Activated T-helper 2 cell treated with anti-CD3 and anti-CD28 coated beads, Interferon-gamma antibody, Interleukin-2, Interleukin-4, amounts not matched to agents 10 μg/mL and 5 μg/mL and 100 μg/mL, durations not matched to agents 14 hours and 24 hours and 36 hours (primary cell): ENCODE measurements at regions of chr1 and their contacts with region 1.

Region 1: DNA sequence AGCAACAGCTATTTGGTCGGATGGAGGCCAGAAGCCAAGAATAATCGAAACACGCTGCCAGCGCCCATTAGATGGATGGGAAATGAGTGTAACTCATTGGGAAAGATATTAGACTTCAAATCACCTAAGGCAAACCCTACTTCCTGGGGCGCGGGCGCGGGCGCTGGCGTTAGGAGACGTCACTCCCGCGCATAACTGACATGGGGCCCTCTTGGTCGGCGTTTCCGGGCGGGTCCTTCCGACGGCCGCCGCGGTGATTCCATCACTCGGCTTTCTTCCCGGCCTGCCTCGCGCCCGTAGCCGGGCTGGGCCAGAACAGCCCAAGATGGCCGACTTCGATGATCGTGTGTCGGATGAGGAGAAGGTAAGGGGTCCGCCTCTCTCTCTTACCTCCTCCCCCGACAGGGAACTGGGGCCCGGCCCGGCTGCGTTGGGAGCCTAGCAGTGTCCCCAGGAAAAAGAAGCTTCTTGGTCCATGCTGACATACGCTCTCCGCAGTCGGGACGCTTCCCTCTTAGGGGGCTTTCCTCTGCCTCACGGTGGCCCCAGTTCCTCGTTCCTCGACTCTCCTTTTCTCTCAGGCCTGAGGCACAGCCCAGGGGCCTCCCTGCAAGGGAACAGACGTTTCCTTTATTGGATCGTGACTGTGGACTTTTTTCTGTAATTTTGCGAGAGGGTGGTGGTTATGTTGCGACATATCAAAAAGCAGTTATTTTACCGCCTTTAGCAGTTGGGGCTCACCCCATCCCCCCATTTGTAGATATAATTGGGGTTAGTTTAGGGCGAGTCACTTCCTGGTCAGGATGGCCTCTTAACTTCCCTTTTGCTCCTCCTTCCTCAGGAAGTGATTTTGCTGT is at the start of gene CAPZA1:
- DNase-seq: peak; percentile 90
- H3K4me3 Mint-ChIP-seq: peak within 1 kb of the TSS; percentile 99
- H3K27ac Mint-ChIP-seq: peak within 1 kb of the TSS; percentile 99
- H3K4me1 Mint-ChIP-seq: peaks cover 25% of the 10 kb centered on the region
- H3K27me3 Mint-ChIP-seq: no peaks in the 10 kb centered on the region
- total RNA-seq, gene CAPZA1: 260 and 269 TPM in 2 replicates

Region 2: GRCh38 chr1:112466078-112466660 is 153.6 kb before region 1 on chr1:
- intact Hi-C with region 1: loop called (anchors 10 kb)
- DNase-seq: peak; percentile 79
- H3K4me3 Mint-ChIP-seq: peak overlapping the region; percentile 77
- H3K27ac Mint-ChIP-seq: no peak overlapping the region
- H3K4me1 Mint-ChIP-seq: peaks cover 13% of the 10 kb centered on the region
- H3K27me3 Mint-ChIP-seq: peaks cover 26% of the 10 kb centered on the region

Region 3: GRCh38 chr1:112508278-112509004 is 111.3 kb before region 1 on chr1 and contains the start of gene WNT2B:
- intact Hi-C with region 1: loop called (anchors 5 kb)
- DNase-seq: peak; percentile 33
- H3K4me3 Mint-ChIP-seq: peak within 1 kb of the TSS; percentile 69
- H3K27ac Mint-ChIP-seq: no peak within 1 kb of the TSS
- H3K4me1 Mint-ChIP-seq: peaks cover 2% of the 10 kb centered on the region
- H3K27me3 Mint-ChIP-seq: peaks cover 55% of the 10 kb centered on the region
- total RNA-seq, gene WNT2B: 0.16 TPM in 1 of 2 replicates, not detected in the other

Region 4: DNA sequence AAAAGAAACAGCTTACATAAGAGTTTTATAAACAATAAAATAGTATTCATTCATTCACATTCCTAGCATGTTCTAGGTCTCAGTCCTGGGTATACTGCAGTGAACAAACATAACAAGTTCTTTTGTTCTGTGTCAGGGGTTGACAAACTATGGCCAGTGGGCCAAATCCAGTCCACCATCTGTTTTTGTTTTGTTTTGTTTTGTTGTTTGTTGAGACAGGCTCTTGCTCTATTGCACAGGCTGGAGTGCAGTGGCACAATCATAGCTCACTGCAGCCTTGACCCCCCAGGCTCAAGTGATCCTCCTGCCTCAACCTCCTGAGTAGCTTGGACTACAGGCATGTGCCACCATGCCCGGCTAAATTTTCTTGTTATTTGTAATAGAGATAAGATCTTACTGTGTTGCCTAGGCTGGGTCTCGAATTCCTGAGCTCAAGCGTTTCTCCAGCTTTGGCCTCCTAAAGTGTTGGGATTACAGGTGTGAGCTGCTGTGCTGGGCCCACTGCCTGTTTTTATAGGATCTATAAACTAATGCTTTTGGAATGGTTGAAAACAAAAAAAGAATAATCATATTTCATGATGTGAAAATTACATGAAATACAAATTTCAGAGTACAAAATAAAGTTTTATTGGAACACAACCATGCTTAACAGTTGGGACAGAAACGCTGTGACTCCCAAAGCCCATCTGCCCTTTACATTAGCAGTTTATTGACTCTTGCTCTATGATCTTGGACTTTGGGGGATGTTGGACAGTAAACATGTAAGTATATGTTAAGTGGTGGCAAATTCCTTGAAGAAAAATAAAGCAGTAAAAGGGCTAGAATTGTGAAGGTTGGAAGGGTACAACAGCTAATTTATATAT is 17.7 kb after region 1 on chr1:
- intact Hi-C with region 1: loop called (anchors 2 kb)
- DNase-seq: no peak
- H3K4me3 Mint-ChIP-seq: no peak overlapping the region
- H3K27ac Mint-ChIP-seq: no peak overlapping the region
- H3K4me1 Mint-ChIP-seq: peaks cover 41% of the 10 kb centered on the region
- H3K27me3 Mint-ChIP-seq: no peaks in the 10 kb centered on the region

Region 5: GRCh38 chr1:112674439-112674985 is 54.8 kb after region 1 on chr1 and contains the start of gene MOV10:
- intact Hi-C with region 1: loop called (anchors 2 kb)
- DNase-seq: peak; percentile 60
- H3K4me3 Mint-ChIP-seq: peak within 1 kb of the TSS; percentile 99
- H3K27ac Mint-ChIP-seq: peak within 1 kb of the TSS; percentile 99
- H3K4me1 Mint-ChIP-seq: peaks cover 43% of the 10 kb centered on the region
- H3K27me3 Mint-ChIP-seq: no peaks in the 10 kb centered on the region
- total RNA-seq, gene MOV10: 64.5 and 68.1 TPM in 2 replicates

Region 6: DNA sequence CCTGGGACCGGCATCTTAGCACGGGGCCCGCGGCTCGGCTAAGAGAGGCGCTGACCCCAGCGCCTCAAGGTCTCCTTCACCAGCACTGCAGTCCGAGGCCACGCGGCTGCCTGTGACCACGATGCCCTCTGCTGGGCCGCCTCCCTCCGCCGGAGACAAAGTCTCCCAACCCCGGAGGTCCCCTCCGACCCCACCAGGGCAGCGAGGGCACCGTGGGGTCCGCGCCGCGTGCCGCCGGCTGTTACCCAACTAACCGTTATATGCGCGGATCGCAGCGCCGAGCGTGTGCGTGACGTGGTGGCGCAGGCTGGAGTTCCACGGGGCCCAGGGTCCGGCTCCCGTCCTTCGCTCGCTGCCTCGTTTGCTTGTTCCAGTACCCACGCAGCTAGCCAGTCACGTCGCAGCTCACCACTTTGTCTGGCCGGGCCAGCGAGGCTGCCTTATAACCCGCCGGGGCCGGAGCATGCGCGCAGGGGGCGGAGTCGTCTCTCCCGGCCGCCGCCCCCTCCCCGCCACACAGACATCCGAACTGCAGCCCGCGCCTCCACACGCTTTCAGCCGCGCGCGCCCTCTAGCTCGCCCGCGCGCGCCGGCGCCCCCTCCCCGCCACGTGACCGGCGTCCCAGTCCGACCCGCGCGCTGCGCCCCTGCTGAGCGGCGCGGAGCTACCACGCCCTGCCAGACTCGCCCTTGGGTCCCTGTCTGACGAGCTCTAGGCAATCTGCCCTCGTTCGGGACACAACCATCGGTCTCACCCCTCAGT is 336.2 kb after region 1 on chr1 and contains the start of gene SLC16A1:
- intact Hi-C with region 1: loop called (anchors 2 kb)
- DNase-seq: peak; percentile 88
- H3K4me3 Mint-ChIP-seq: peak within 1 kb of the TSS; percentile 100
- H3K27ac Mint-ChIP-seq: peak within 1 kb of the TSS; percentile 100
- H3K4me1 Mint-ChIP-seq: peaks cover 56% of the 10 kb centered on the region
- H3K27me3 Mint-ChIP-seq: no peaks in the 10 kb centered on the region
- total RNA-seq, gene SLC16A1: 75.8 and 77.1 TPM in 2 replicates